ENCODE measurements at regions of chr17 and their contacts with region 1.

Region 1: DNA sequence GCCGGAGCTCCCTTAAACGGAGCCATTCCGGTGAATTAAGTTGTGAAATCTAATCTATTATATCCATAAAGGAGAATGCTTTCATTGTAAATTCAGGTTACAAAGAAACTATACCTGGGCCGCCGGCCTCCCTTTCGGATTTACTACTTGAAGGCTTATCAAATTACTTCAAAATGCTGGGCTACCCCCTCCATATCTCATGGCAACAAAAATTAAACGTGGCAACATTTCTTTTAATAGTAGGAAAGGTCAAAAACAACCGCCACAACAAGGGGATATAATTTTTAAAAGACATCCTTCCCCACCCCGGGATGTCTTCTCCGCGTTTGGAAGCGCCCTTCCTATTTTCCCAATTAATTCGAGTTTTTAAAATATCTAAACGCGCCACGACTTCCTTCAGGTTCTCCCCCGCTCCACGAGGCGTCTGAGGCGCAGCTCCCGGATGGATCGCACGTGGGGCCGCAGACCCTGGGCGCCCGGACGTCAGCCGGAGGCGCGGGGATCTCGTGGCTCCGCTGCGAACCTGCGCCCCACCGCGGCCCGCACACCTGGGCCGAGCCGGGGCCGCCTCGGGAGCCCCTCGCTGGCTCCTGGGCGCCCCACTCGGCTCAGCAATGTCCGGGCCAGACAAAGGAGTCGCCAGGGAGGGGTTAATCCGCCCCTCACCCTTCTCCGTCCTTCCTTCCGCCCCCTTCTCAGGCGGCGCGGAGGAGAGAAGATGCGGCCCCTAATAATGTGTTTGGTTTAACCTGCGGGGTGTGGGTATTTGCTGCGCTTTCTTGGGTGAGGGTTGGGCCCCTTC is 47.4 kb upstream of the SLC38A10 start:
- DNase-seq: no peak
- H3K4me3 ChIP-seq: peak overlapping the region; percentile 100
- H3K27ac ChIP-seq: peak overlapping the region; percentile 87 to 99
- H3K4me1 ChIP-seq: peaks cover 10 to 64% of the 10 kb centered on the region in 2 experiments
- H3K27me3 ChIP-seq: no peaks in the 10 kb centered on the region
- CTCF ChIP-seq: no peak
- EP300 ChIP-seq: no peak
- RAD21 ChIP-seq: no peak

Region 2: DNA sequence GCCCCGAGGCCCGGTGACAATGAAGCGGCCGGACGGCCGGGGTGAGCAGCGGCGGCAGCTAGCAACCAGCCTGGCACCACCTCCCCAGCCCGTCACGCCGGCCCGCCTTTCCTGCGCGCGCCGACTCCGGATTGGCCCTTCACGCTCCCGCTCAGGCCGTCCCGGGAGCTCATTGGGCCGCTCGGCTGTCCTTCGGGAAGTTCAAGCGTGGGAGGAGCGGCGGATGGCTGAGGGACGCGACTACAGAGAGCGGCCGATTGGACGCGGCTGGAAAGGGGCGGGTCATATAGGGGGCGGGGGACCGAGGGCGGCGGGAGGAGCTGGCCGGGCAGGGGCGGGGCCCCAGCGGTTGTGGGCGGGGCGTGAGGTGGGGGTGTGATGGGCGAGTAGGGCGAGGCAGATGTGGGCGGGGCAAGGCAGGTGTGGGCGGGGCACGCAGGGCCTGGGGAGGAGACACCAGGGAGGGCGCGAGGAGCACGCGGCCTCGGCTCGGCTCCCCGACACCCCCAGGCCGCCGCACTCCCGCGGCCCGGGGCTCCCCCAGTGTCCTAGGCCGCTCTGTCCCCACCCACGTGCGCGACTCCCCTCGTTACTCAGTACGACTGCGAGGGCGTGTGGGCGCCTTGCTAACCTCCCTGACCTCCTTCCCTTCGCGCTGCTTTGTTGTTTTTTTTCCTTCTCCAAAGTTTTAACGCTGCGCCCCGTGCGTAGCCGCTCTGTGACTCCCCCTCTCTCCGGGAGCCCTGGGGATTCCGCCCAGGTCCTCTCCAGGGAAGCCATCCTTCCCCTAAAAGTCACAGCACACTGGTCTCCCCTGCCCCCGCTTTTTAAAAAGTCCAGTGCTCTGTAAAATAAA is 119.3 kb before region 1 on chr17 and contains the start of gene CEP131:
- CTCF ChIA-PET with region 1: no interaction called
- POLR2A ChIA-PET with region 1: no interaction called
- DNase-seq: peak; percentile 100
- H3K4me3 ChIP-seq: peak within 1 kb of the TSS; percentile 76 to 94
- H3K27ac ChIP-seq: peak within 1 kb of the TSS in 1 of 2 experiments; percentile 24; a peak in 1 of 4 replicates
- H3K4me1 ChIP-seq: peaks cover 7 to 16% of the 10 kb centered on the region in 2 experiments; a peak in 3 of 4 replicates
- H3K27me3 ChIP-seq: no peaks in the 10 kb centered on the region
- CTCF ChIP-seq: no peak
- EP300 ChIP-seq: no peak
- RAD21 ChIP-seq: no peak
- polyA plus RNA-seq, gene CEP131: 26.5 and 34.8 TPM in 2 replicates

Region 3: GRCh38 chr17:81322271-81323082 is 20.0 kb before region 1 on chr17:
- CTCF ChIA-PET with region 1: interaction called, 15 read pairs
- POLR2A ChIA-PET with region 1: no interaction called
- DNase-seq: peak; percentile 94
- H3K4me3 ChIP-seq: no peak overlapping the region
- H3K27ac ChIP-seq: peak overlapping the region in 1 of 2 experiments; percentile 83; a peak in 1 of 4 replicates
- H3K4me1 ChIP-seq: peaks cover 0 to 49% of the 10 kb centered on the region in 2 experiments; a peak in 1 of 4 replicates
- H3K27me3 ChIP-seq: no peaks in the 10 kb centered on the region
- CTCF ChIP-seq: peak; percentile 56
- EP300 ChIP-seq: no peak
- RAD21 ChIP-seq: peak; percentile 43

Region 4: GRCh38 chr17:81328978-81329919 is 13.2 kb before region 1 on chr17:
- CTCF ChIA-PET with region 1: interaction called, 15 read pairs
- POLR2A ChIA-PET with region 1: interaction called, 10 read pairs
- DNase-seq: peak; percentile 91
- H3K4me3 ChIP-seq: no peak overlapping the region
- H3K27ac ChIP-seq: peak overlapping the region; percentile 63 to 97
- H3K4me1 ChIP-seq: peaks cover 19 to 80% of the 10 kb centered on the region in 2 experiments
- H3K27me3 ChIP-seq: no peaks in the 10 kb centered on the region
- CTCF ChIP-seq: no peak
- EP300 ChIP-seq: peak; percentile 71 to 87; a peak in 3 of 4 replicates
- RAD21 ChIP-seq: peak; percentile 15; the same call in 1 of the 2 replicates

Measured in SK-N-SH (cell line).